GM12878 (cell line): ENCODE measurements at regions of chr11 and their contacts with region 1.

Region 1: GRCh38 chr11:123429913-123430720 is at the start of gene GRAMD1B:
- DNase-seq: no peak
- ATAC-seq: peak; percentile 78
- H3K4me3 ChIP-seq: peak within 1 kb of the TSS; percentile 87
- H3K27ac ChIP-seq: peak within 1 kb of the TSS; percentile 40
- H3K4me1 ChIP-seq: peaks cover 3% of the 10 kb centered on the region
- H3K27me3 ChIP-seq: no peaks in the 10 kb centered on the region
- CTCF ChIP-seq: peak; percentile 19 to 29 (median 28); a peak in 3 of 6 replicates
- EP300 ChIP-seq: no peak
- POLR2A ChIP-seq: no peak; the same call in 1 of the 2 replicates
- RAD21 ChIP-seq: no peak
- polyA plus RNA-seq, gene GRAMD1B: 1.9 to 3.5 TPM

Region 2: GRCh38 chr11:123450623-123451022 is 20.5 kb after region 1 on chr11:
- CTCF ChIA-PET with region 1: interaction called, 12 read pairs
- POLR2A ChIA-PET with region 1: interaction called, 3 read pairs
- RAD21 ChIA-PET with region 1: interaction called, 3 read pairs
- SMC1A ChIA-PET with region 1: interaction called, 4 read pairs
- in situ Hi-C with region 1: no loop called
- intact Hi-C with region 1: no loop called
- DNase-seq: no peak
- ATAC-seq: no peak
- H3K4me3 ChIP-seq: no peak overlapping the region
- H3K27ac ChIP-seq: no peak overlapping the region
- H3K4me1 ChIP-seq: peaks cover 32% of the 10 kb centered on the region
- H3K27me3 ChIP-seq: no peaks in the 10 kb centered on the region
- CTCF ChIP-seq: no peak
- EP300 ChIP-seq: no peak
- POLR2A ChIP-seq: no peak
- RAD21 ChIP-seq: no peak